CD4-positive, alpha-beta memory T cell (primary cell): ENCODE measurements at regions of chr2 and their contacts with region 1.

Region 1: DNA sequence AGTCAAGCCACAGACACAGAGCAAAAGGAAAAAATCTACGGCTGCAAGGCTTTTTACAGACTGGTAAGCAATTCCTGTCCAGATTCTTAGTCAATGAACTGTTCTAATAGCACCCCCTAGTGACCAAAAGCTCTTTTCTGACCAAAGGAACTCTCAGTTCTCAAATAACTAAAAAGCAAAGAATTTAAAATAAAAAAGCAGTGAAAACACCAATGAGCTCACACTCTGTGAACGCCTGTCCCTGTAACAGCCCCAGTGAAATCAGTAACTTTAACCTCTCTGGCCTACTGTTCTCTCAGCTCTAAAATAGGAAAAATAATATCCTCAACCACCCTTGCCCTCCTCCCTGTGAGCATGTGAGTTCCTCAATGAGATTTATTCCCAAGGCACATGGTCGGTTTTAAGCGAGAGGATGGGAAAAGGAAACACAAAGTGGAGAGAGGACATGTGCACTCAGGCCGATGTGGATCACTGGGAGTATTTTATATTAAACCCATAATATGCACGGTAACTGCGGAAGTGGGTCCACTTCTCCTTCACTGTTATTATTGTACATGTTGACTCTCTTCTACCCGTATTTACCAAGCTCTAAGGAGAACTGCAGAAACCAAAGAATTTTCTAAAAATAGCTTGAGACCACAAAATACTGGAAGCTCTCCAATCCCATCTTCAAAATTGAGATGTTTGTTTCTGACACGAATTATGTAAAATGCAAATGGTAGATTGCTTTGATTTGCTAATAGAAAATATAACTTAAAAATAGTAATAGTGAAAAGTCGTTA is 128.5 kb downstream of the STK39 start:
- DNase-seq: peak in 4 of 5 donors; percentile 28 to 37 (median 36)
- H3K4me3 ChIP-seq: no peak overlapping the region
- H3K4me3 Mint-ChIP-seq: no peak overlapping the region
- H3K27ac ChIP-seq: no peak overlapping the region
- H3K27ac Mint-ChIP-seq: no peak overlapping the region
- H3K4me1 ChIP-seq: no peaks in the 10 kb centered on the region
- H3K4me1 Mint-ChIP-seq: peaks cover 0 to 2% (median 0%) of the 10 kb centered on the region in 4 donors
- H3K27me3 ChIP-seq: no peaks in the 10 kb centered on the region
- H3K27me3 Mint-ChIP-seq: no peaks in the 10 kb centered on the region

Region 2: GRCh38 chr2:166539340-166540162 is 1579.4 kb before region 1 on chr2:
- CTCF ChIA-PET with region 1: interaction called, 13 read pairs
- POLR2A ChIA-PET with region 1: no interaction called
- intact Hi-C with region 1: no loop called
- DNase-seq: peak in 4 of 5 donors; percentile 16 to 47 (median 18)
- H3K4me3 ChIP-seq: no peak overlapping the region
- H3K4me3 Mint-ChIP-seq: no peak overlapping the region
- H3K27ac ChIP-seq: no peak overlapping the region
- H3K27ac Mint-ChIP-seq: no peak overlapping the region
- H3K4me1 ChIP-seq: no peaks in the 10 kb centered on the region
- H3K4me1 Mint-ChIP-seq: peaks cover 2 to 4% (median 3%) of the 10 kb centered on the region in 4 donors
- H3K27me3 ChIP-seq: no peaks in the 10 kb centered on the region
- H3K27me3 Mint-ChIP-seq: peaks cover 2 to 6% of the 10 kb centered on the region in 2 donors

Region 3: GRCh38 chr2:168084327-168084726 is 34.6 kb before region 1 on chr2:
- CTCF ChIA-PET with region 1: interaction called, 21 read pairs
- POLR2A ChIA-PET with region 1: no interaction called
- intact Hi-C with region 1: no loop called
- DNase-seq: no peak
- H3K4me3 ChIP-seq: no peak overlapping the region
- H3K4me3 Mint-ChIP-seq: no peak overlapping the region
- H3K27ac ChIP-seq: no peak overlapping the region
- H3K27ac Mint-ChIP-seq: peak overlapping the region in 1 of 7 donors; percentile 34
- H3K4me1 ChIP-seq: peaks cover 10% of the 10 kb centered on the region
- H3K4me1 Mint-ChIP-seq: peaks cover 13 to 30% (median 19%) of the 10 kb centered on the region in 4 donors
- H3K27me3 ChIP-seq: no peaks in the 10 kb centered on the region
- H3K27me3 Mint-ChIP-seq: no peaks in the 10 kb centered on the region

Region 4: DNA sequence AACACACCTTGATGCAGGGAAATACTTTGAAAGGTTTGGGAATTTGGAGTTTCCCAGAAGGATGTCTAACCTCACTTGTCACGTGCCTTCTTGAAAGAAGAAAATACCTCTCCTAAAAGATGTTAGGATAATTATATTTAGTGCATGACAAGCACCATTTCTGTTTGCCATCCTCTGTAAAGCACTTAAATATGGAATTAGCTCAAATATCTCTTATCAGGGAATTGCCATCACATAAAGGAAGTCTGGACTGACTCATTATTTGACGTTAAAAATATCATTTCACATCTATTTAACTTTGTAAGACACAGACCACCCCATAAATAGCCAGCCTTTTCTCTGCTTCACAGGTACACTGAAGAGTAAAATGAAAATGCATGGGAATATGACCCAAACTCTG is 11.6 kb before region 1 on chr2:
- CTCF ChIA-PET with region 1: interaction called, 32 read pairs
- POLR2A ChIA-PET with region 1: no interaction called
- intact Hi-C with region 1: no loop called
- DNase-seq: no peak
- H3K4me3 ChIP-seq: no peak overlapping the region
- H3K4me3 Mint-ChIP-seq: no peak overlapping the region
- H3K27ac ChIP-seq: no peak overlapping the region
- H3K27ac Mint-ChIP-seq: no peak overlapping the region
- H3K4me1 ChIP-seq: no peaks in the 10 kb centered on the region
- H3K4me1 Mint-ChIP-seq: peaks cover 0 to 4% (median 3%) of the 10 kb centered on the region in 4 donors
- H3K27me3 ChIP-seq: no peaks in the 10 kb centered on the region
- H3K27me3 Mint-ChIP-seq: no peaks in the 10 kb centered on the region

Region 5: GRCh38 chr2:168136392-168136977 is 17.6 kb after region 1 on chr2:
- CTCF ChIA-PET with region 1: interaction called, 53 read pairs
- POLR2A ChIA-PET with region 1: no interaction called
- intact Hi-C with region 1: no loop called
- DNase-seq: peak in 4 of 5 donors; percentile 19 to 41 (median 30)
- H3K4me3 ChIP-seq: no peak overlapping the region
- H3K4me3 Mint-ChIP-seq: no peak overlapping the region
- H3K27ac ChIP-seq: no peak overlapping the region
- H3K27ac Mint-ChIP-seq: peak overlapping the region in 1 of 7 donors; percentile 73
- H3K4me1 ChIP-seq: no peaks in the 10 kb centered on the region
- H3K4me1 Mint-ChIP-seq: peaks cover 8 to 25% (median 21%) of the 10 kb centered on the region in 4 donors
- H3K27me3 ChIP-seq: no peaks in the 10 kb centered on the region
- H3K27me3 Mint-ChIP-seq: no peaks in the 10 kb centered on the region

Region 6: GRCh38 chr2:168336864-168337263 is 217.9 kb after region 1 on chr2:
- CTCF ChIA-PET with region 1: interaction called, 36 read pairs
- POLR2A ChIA-PET with region 1: no interaction called
- intact Hi-C with region 1: no loop called
- DNase-seq: peak; percentile 46 to 66 (median 58)
- H3K4me3 ChIP-seq: no peak overlapping the region
- H3K4me3 Mint-ChIP-seq: no peak overlapping the region
- H3K27ac ChIP-seq: no peak overlapping the region
- H3K27ac Mint-ChIP-seq: peak overlapping the region in 1 of 7 donors; percentile 38
- H3K4me1 ChIP-seq: peaks cover 4% of the 10 kb centered on the region
- H3K4me1 Mint-ChIP-seq: peaks cover 2 to 8% (median 4%) of the 10 kb centered on the region in 4 donors
- H3K27me3 ChIP-seq: no peaks in the 10 kb centered on the region
- H3K27me3 Mint-ChIP-seq: peaks cover 2 to 4% of the 10 kb centered on the region in 2 donors